Activated CD4-positive, alpha-beta memory T cell treated with anti-CD3 and anti-CD28 coated beads for 36 hours (primary cell): ENCODE measurements at regions of chr2 and their contacts with region 1.

Region 1: GRCh38 chr2:181715033-181715630 is 34.8 kb upstream of the NEUROD1 start:
- DNase-seq: peak; percentile 75
- H3K4me3 Mint-ChIP-seq: no peak overlapping the region
- H3K27ac Mint-ChIP-seq: no peak overlapping the region
- H3K4me1 Mint-ChIP-seq: no peaks in the 10 kb centered on the region
- H3K27me3 Mint-ChIP-seq: no peaks in the 10 kb centered on the region

Region 2: DNA sequence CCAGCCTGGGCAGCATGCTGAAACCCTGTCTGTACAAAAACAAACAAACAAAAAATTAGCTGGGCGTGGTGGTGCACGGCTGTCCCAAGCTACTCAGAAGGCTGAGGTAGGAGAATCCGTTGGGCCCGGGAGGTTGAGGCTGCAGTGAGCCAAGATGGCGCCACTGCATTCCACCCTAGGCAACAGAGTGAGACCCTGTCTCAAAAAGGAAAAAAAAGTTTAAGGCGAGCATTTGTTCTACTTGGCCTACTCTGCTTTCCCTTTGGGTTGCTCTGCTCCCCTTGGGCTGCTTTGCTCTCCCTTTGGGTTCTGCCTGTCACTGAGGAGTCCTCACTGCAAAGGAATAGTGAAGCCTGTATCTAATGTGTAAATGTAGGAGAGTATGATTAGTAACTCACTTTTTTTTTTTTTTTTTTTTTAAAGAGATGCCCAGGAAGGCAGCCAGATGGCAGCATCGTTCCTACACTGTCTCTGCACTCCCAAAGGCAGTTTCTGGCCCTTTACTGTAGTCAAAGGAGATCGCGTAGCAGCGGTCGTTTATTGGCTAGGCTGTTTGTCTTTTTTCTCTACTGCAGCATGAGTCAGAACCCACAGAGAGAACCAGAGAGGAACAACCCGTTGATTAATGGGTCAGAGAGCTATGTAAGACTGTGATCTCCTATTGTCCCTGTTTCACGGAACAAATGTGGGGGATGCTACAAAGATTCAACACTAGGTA is 1589.7 kb before region 1 on chr2:
- CTCF ChIA-PET with region 1: interaction called, 12 read pairs
- POLR2A ChIA-PET with region 1: no interaction called
- intact Hi-C with region 1: loop called (anchors 1 kb)
- DNase-seq: peak; percentile 59
- H3K4me3 Mint-ChIP-seq: no peak overlapping the region
- H3K27ac Mint-ChIP-seq: no peak overlapping the region
- H3K4me1 Mint-ChIP-seq: no peaks in the 10 kb centered on the region
- H3K27me3 Mint-ChIP-seq: no peaks in the 10 kb centered on the region

Region 3: GRCh38 chr2:181077128-181077709 is 637.9 kb before region 1 on chr2:
- CTCF ChIA-PET with region 1: interaction called, 12 read pairs
- POLR2A ChIA-PET with region 1: no interaction called
- intact Hi-C with region 1: loop called (anchors 1 kb)
- DNase-seq: no peak
- H3K4me3 Mint-ChIP-seq: no peak overlapping the region
- H3K27ac Mint-ChIP-seq: no peak overlapping the region
- H3K4me1 Mint-ChIP-seq: peaks cover 7% of the 10 kb centered on the region
- H3K27me3 Mint-ChIP-seq: no peaks in the 10 kb centered on the region

Region 4: GRCh38 chr2:181466661-181467576 is 248.2 kb before region 1 on chr2:
- CTCF ChIA-PET with region 1: interaction called, 12 read pairs
- POLR2A ChIA-PET with region 1: no interaction called
- intact Hi-C with region 1: loop called (anchors 10 kb)
- DNase-seq: peak; percentile 83
- H3K4me3 Mint-ChIP-seq: no peak overlapping the region
- H3K27ac Mint-ChIP-seq: peak overlapping the region; percentile 77
- H3K4me1 Mint-ChIP-seq: peaks cover 84% of the 10 kb centered on the region
- H3K27me3 Mint-ChIP-seq: no peaks in the 10 kb centered on the region

Region 5: DNA sequence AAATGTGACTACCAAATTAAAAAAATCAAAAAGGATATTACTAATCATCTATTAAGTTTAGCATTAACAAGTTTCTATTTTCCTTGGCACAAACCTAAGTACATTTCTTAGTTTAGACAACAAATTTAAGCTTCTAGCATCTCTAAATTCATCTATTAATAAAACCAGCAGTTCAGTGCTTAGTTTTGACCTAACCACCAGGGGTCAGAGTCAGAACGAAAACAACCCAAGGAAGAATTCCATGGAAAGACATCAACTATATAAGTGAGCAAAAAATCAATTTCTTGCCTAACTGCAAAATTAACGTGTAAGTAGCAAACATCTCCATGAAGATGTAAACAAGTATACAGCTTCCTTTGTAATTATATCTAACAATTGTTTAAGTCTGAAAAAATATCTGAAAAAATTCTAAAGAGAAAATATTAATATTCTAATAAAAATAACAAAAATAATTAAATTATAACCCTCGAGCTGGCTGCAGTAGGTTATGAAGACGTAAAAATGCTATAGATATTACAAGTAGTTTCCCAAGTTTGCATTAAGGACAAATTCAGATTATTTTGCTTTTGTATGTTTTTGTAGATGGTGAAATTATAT is 141.9 kb before region 1 on chr2:
- CTCF ChIA-PET with region 1: interaction called, 13 read pairs
- POLR2A ChIA-PET with region 1: no interaction called
- intact Hi-C with region 1: loop called (anchors 2 kb)
- DNase-seq: no peak
- H3K4me3 Mint-ChIP-seq: no peak overlapping the region
- H3K27ac Mint-ChIP-seq: no peak overlapping the region
- H3K4me1 Mint-ChIP-seq: no peaks in the 10 kb centered on the region
- H3K27me3 Mint-ChIP-seq: no peaks in the 10 kb centered on the region

Region 6: GRCh38 chr2:181648478-181649155 is 66.5 kb before region 1 on chr2:
- CTCF ChIA-PET with region 1: no interaction called
- POLR2A ChIA-PET with region 1: no interaction called
- intact Hi-C with region 1: no loop called
- DNase-seq: no peak
- H3K4me3 Mint-ChIP-seq: no peak overlapping the region
- H3K27ac Mint-ChIP-seq: no peak overlapping the region
- H3K4me1 Mint-ChIP-seq: no peaks in the 10 kb centered on the region
- H3K27me3 Mint-ChIP-seq: peaks cover 27% of the 10 kb centered on the region

Region 7: DNA sequence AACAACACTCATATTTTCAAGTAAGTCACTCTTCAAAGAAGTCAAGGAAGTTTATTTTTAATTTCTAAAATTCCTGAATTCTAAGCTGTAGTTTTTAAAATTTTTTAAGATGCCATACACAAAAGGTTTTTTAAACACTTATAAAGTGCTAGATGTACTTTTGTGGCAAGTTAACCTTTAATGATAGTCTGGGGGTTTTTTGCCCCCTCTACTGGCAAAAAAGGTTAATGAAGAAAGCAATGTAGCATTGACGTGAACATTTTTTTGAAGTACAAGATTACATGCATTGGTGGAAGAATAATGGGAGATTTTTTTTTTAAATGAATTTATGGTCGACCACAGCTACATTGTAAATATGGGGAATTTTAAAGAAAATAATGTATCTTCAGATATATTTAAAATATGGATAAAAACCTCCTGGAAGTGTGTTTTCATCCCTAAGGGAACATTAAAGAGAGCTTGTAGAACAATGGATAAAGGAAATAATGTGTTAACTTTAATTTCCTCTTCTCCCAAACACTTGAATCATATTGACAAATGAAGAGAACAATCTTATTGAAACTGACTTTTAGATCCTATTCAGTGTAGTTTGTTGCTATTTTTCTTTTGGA is 189.0 kb after region 1 on chr2:
- CTCF ChIA-PET with region 1: interaction called, 10 read pairs
- POLR2A ChIA-PET with region 1: no interaction called
- intact Hi-C with region 1: no loop called
- DNase-seq: no peak
- H3K4me3 Mint-ChIP-seq: no peak overlapping the region
- H3K27ac Mint-ChIP-seq: no peak overlapping the region
- H3K4me1 Mint-ChIP-seq: peaks cover 13% of the 10 kb centered on the region
- H3K27me3 Mint-ChIP-seq: no peaks in the 10 kb centered on the region